Psoas muscle (tissue), 8 donors: ENCODE measurements at regions of chr2 and their contacts with region 1.

Region 1: GRCh38 chr2:130342533-130343275 is at the start of gene IMP4:
- DNase-seq: peak; percentile 96 to 97
- ATAC-seq: peak; percentile 96 to 98 (median 98)
- H3K4me3 ChIP-seq: peak within 1 kb of the TSS; percentile 99
- H3K27ac ChIP-seq: peak within 1 kb of the TSS; percentile 91
- H3K4me1 ChIP-seq: peaks cover 15% of the 10 kb centered on the region
- H3K27me3 ChIP-seq: no peaks in the 10 kb centered on the region
- CTCF ChIP-seq: peak; percentile 26
- total RNA-seq, gene IMP4: 74.4 to 118 (median 105) TPM

Region 2: GRCh38 chr2:130181325-130181879 is 161.3 kb before region 1 on chr2 and contains the start of gene SMPD4:
- intact Hi-C with region 1: loop called (anchors 5 kb)
- DNase-seq: peak; percentile 98 to 99
- ATAC-seq: peak; percentile 92 to 96 (median 94)
- H3K4me3 ChIP-seq: peak within 1 kb of the TSS; percentile 90
- H3K27ac ChIP-seq: peak within 1 kb of the TSS; percentile 93
- H3K4me1 ChIP-seq: peaks cover 7% of the 10 kb centered on the region
- H3K27me3 ChIP-seq: no peaks in the 10 kb centered on the region
- CTCF ChIP-seq: no peak
- total RNA-seq, gene SMPD4: 17.7 to 26.1 (median 21.9) TPM